Adrenal gland (tissue), 19 donors: ENCODE measurements at regions of chr5 and their contacts with region 1.

Region 1: DNA sequence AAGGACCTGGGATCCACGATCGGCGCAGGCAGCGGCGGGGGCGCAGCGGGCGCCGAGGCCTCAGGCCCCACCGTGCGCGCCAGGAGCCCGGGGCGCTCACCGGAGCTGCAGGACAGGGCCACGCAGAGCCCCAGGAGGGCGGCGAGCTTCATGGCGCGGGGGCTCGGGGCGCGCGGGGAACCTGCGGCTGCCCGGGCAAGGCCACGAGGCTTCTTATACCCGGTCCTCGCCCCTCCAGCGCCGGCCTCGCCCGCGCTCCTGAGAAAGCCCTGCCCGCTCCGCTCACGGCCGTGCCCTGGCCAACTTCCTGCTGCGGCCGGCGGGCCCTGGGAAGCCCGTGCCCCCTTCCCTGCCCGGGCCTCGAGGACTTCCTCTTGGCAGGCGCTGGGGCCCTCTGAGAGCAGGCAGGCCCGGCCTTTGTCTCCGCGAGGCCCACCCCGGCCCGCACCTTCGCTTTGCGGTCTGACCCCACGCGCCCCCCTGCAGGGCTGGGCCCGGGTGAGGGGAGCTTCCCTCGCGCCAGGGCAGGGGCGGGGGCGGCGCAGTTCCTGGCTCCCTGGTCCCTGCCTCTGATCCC is at the start of gene SCGB3A1:
- DNase-seq: peak in 2 of 7 donors; percentile 17 to 27
- H3K4me3 ChIP-seq: peak within 1 kb of the TSS in 1 of 4 donors; percentile 29
- H3K27ac ChIP-seq: no peak within 1 kb of the TSS
- H3K4me1 ChIP-seq: peaks cover 0 to 16% of the 10 kb centered on the region in 2 donors
- H3K27me3 ChIP-seq: peaks cover 40% of the 10 kb centered on the region
- CTCF ChIP-seq: no peak
- POLR2A ChIP-seq: no peak
- total RNA-seq, gene SCGB3A1: 1.2 to 2.0 (median 1.4) TPM in 6 of 9 donors, not detected in the others

Region 2: GRCh38 chr5:179907570-179908324 is 683.7 kb before region 1 on chr5 and contains the start of gene TBC1D9B:
- intact Hi-C with region 1: no loop called
- DNase-seq: peak; percentile 59 to 74 (median 69)
- H3K4me3 ChIP-seq: peak within 1 kb of the TSS in 3 of 4 donors; percentile 18 to 70 (median 66)
- H3K27ac ChIP-seq: peak within 1 kb of the TSS; percentile 13 to 93 (median 77)
- H3K4me1 ChIP-seq: peaks cover 15 to 28% of the 10 kb centered on the region in 2 donors
- H3K27me3 ChIP-seq: no peaks in the 10 kb centered on the region
- CTCF ChIP-seq: peak in 3 of 6 experiments; percentile 39 to 70 (median 51)
- POLR2A ChIP-seq: peak in 1 of 2 donors; percentile 59
- total RNA-seq, gene TBC1D9B: 30.7 to 192 (median 159) TPM

Region 3: DNA sequence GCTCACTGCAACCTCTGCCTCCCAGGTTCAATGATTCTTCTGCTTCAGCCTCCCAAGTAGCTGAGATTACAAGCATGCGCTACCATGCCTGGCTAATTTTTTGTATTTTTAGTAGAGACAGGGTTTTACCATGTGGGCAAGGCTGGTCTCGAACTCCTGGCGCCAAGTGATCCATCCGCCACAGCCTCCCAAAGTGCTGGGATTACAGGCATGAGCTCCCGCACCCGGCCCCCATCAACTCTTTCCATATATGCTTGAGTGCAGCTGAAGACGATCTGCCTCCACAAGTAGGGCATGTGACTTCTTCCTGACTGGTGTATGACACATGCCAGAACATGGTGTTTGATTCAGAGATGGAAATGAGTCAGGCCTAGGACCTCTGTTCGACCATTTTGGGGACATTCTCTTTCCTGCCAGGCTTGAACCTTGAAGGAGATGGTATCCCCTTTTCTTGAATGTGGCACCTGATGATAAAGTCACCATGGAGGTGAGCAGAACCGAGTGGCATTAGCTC is 104.7 kb before region 1 on chr5:
- intact Hi-C with region 1: loop called in 1 of 2 experiments (anchors 10 kb)
- DNase-seq: peak in 1 of 7 donors; percentile 25
- H3K4me3 ChIP-seq: no peak overlapping the region
- H3K27ac ChIP-seq: no peak overlapping the region
- H3K4me1 ChIP-seq: peaks cover 0 to 7% of the 10 kb centered on the region in 2 donors
- H3K27me3 ChIP-seq: no peaks in the 10 kb centered on the region
- CTCF ChIP-seq: no peak
- POLR2A ChIP-seq: no peak

Region 4: DNA sequence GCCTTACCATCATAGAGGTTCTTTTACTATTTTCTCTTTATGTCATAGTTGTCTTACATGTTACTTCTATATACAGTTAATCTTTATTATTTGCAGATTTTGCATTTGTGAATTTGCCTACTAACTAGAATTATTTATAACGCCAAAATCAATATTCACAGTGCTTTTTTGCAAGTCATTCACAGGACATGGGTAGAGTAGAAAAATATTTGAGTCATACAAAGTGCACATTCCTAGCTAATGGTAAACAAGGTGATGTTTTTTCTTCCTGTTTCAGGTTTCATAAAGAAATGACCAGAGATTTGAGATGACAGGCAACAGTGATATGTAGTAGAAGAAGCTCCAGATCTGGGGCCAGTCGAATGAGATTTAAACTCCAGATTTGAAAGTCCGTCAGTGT is 178.4 kb after region 1 on chr5:
- intact Hi-C with region 1: no loop called
- DNase-seq: no peak
- H3K4me3 ChIP-seq: no peak overlapping the region
- H3K27ac ChIP-seq: no peak overlapping the region
- H3K4me1 ChIP-seq: no peaks in the 10 kb centered on the region
- H3K27me3 ChIP-seq: no peaks in the 10 kb centered on the region
- CTCF ChIP-seq: no peak
- POLR2A ChIP-seq: no peak